ENCODE measurements at regions of chr4 and their contacts with region 1.

Region 1: GRCh38 chr4:102299354-102300107 is 45.8 kb downstream of the SLC39A8 start:
- DNase-seq: peak; percentile 69
- H3K4me3 Mint-ChIP-seq: no peak overlapping the region
- H3K27ac Mint-ChIP-seq: no peak overlapping the region
- H3K4me1 Mint-ChIP-seq: peaks cover 4% of the 10 kb centered on the region
- H3K27me3 Mint-ChIP-seq: no peaks in the 10 kb centered on the region

Region 2: DNA sequence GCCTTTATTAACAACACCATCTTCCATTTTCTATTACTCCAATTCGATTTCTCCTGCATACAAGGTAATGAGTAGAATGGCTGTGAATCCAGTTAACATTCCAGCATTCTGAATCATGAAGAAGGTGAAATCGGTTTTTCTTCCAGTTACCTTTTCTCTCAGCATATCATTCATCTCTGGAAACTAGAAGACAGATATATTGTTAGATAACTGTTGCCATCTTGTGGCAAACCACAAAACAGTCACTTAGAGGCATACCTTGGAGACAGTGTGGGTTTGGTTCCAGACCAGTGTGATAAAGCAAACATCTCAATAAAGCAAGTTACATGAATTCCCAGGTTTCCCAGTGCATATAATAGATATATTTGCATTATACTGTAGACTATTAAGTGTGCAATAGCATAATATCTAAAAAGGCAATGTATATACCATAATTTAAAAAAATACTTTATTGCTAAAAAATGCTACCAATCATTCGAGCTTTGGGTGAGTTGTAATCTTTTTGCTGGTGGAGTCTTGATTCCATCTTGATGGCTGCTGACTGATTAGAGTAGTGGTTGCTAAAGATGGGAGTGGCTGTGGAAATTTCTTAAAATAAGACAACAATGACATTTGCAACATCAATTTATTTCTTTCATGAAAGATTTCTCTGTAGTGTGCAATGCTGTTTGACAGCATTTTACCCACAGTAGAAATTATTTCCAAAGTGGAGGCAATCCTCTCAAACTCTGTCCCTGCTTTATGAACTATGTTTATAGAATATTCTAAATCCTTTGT is 36.3 kb before region 1 on chr4:
- intact Hi-C with region 1: loop called (anchors 5 kb)
- DNase-seq: peak; percentile 70
- H3K4me3 Mint-ChIP-seq: no peak overlapping the region
- H3K27ac Mint-ChIP-seq: no peak overlapping the region
- H3K4me1 Mint-ChIP-seq: peaks cover 11% of the 10 kb centered on the region
- H3K27me3 Mint-ChIP-seq: no peaks in the 10 kb centered on the region

Measured in activated CD4-positive, alpha-beta T cell treated with anti-CD3 and anti-CD28 coated beads, Interleukin-2, amount 10 ng/mL, durations not matched to agents 24 days and 14 days (primary cell).